ENCODE measurements at regions of chr17 and their contacts with region 1.

Region 1: DNA sequence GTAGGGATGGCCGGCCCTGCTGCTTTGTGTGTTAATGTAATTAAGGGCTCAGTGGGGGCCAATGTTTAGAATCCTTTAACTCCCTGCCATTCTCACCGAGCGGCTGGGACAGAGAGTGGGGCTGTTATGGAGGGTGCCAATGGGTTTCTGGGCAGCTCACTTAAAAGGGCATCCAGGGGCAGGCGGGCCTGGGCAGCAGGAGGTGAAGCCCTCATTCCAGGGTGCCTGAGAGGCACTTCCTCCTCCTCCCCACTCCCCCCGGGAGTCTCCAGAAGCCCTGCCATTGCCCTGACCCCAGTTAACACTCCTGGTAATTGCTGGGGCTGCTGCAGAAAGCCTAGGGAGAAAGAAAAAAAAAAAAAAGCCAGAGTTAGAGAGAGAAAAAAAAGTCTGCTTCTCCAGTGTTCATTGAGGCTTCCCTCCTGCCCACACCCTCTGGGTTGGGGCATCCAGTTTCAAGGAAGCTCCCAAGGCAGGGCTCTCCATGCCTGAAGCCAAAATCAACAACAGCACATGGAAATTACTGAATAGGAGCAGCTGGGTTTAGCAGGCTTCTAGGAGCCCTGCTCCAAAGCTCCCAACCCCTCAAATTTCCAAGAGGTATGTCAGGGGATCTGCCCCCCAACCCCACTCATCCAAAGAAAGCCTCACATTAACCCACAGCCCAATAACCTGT is 28.0 kb downstream of the CUEDC1 start:
- DNase-seq: peak; percentile 53
- H3K4me3 ChIP-seq: no peak overlapping the region
- H3K27me3 ChIP-seq: no peaks in the 10 kb centered on the region
- CTCF ChIP-seq: no peak

Region 2: GRCh38 chr17:57970706-57971105 is 43.5 kb after region 1 on chr17:
- CTCF ChIA-PET with region 1: no interaction called
- POLR2A ChIA-PET with region 1: interaction called, 14 read pairs
- DNase-seq: no peak
- H3K4me3 ChIP-seq: no peak overlapping the region
- H3K27me3 ChIP-seq: no peaks in the 10 kb centered on the region
- CTCF ChIP-seq: no peak

Region 3: GRCh38 chr17:58032691-58033415 is 105.7 kb after region 1 on chr17:
- CTCF ChIA-PET with region 1: no interaction called
- POLR2A ChIA-PET with region 1: no interaction called
- DNase-seq: no peak
- H3K4me3 ChIP-seq: no peak overlapping the region
- H3K27me3 ChIP-seq: no peaks in the 10 kb centered on the region
- CTCF ChIP-seq: no peak

Region 4: GRCh38 chr17:58136669-58137283 is 209.6 kb after region 1 on chr17:
- CTCF ChIA-PET with region 1: no interaction called
- POLR2A ChIA-PET with region 1: no interaction called
- DNase-seq: no peak
- H3K4me3 ChIP-seq: no peak overlapping the region
- H3K27me3 ChIP-seq: peaks cover 8% of the 10 kb centered on the region
- CTCF ChIP-seq: peak; percentile 45